ENCODE measurements at regions of chr7 and their contacts with region 1.

Region 1: DNA sequence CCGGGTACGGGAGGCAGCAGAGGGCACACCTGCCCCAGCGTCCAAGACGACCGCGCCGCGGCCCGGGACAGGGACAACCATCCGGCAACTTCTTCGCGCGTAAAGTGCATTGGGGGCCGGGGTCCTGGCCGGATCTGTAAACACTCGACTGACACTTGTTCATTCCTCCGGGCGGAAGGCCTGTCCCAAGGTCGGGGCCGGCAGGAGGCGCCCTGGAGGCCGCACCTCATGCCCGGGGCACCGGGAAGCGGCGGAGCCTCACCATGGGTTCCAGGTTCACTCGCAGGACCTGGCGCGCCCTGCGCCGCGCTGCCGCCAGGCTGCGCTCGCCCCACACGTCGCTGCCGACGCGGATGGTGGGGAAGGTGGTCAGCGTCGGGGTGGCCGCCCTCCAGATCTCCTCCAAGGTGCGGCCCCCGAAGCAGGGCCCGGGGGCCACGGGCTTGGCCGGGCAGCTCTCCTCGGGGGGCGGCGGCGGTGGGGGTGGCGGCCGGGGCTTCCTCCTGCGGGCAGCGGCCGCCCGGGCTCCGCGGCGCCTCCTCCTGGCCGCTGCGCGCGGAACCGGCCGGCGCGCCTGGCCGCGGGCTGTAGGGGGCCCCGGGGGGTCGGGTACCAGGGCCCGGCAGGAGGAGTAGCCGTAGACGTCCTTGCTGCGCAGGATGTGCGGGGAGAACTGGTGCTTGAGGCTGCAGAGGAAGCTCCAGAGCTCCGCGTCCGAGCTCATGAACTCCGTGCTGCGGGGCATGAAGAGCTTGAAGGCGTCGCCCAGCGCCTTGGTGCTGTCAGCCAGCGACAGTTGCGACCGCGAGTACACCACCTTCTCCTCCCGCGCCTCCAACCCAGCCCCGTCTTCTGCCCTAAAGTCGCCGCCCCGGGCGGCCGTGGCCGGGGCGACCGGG is 746 bp downstream of the CCDC71L start:
- DNase-seq: peak; percentile 71 to 87
- ATAC-seq: peak; percentile 47 to 63 (median 51)
- H3K4me3 ChIP-seq: peak overlapping the region; percentile 86
- H3K4me3 Mint-ChIP-seq: peak overlapping the region; percentile 97
- H3K27ac ChIP-seq: peak overlapping the region; percentile 91
- H3K27ac Mint-ChIP-seq: peak overlapping the region; percentile 90 to 92
- H3K4me1 ChIP-seq: peaks cover 15% of the 10 kb centered on the region
- H3K4me1 Mint-ChIP-seq: peaks cover 21 to 23% of the 10 kb centered on the region in 2 donors
- H3K27me3 ChIP-seq: no peaks in the 10 kb centered on the region
- H3K27me3 Mint-ChIP-seq: no peaks in the 10 kb centered on the region
- CTCF ChIP-seq: peak; percentile 71

Region 2: GRCh38 chr7:106285051-106285854 is 375.0 kb before region 1 on chr7:
- intact Hi-C with region 1: loop called (anchors 2 kb)
- DNase-seq: peak; percentile 92 to 98
- ATAC-seq: peak; percentile 88 to 96 (median 89)
- H3K4me3 ChIP-seq: peak overlapping the region; percentile 97
- H3K4me3 Mint-ChIP-seq: peak overlapping the region; percentile 95
- H3K27ac ChIP-seq: peak overlapping the region; percentile 97
- H3K27ac Mint-ChIP-seq: peak overlapping the region; percentile 93 to 95
- H3K4me1 ChIP-seq: peaks cover 12% of the 10 kb centered on the region
- H3K4me1 Mint-ChIP-seq: peaks cover 16 to 20% of the 10 kb centered on the region in 2 donors
- H3K27me3 ChIP-seq: no peaks in the 10 kb centered on the region
- H3K27me3 Mint-ChIP-seq: peaks cover under 1 to 2% of the 10 kb centered on the region in 2 donors
- CTCF ChIP-seq: no peak

Region 3: GRCh38 chr7:106717955-106718871 is 58.0 kb after region 1 on chr7:
- intact Hi-C with region 1: loop called (anchors 5 kb)
- DNase-seq: peak; percentile 22 to 63
- ATAC-seq: peak; percentile 94 to 98 (median 94)
- H3K4me3 ChIP-seq: no peak overlapping the region
- H3K4me3 Mint-ChIP-seq: no peak overlapping the region
- H3K27ac ChIP-seq: peak overlapping the region; percentile 54
- H3K27ac Mint-ChIP-seq: no peak overlapping the region
- H3K4me1 ChIP-seq: peaks cover 5% of the 10 kb centered on the region
- H3K4me1 Mint-ChIP-seq: no peaks in the 10 kb centered on the region
- H3K27me3 ChIP-seq: no peaks in the 10 kb centered on the region
- H3K27me3 Mint-ChIP-seq: peaks cover 0 to 2% of the 10 kb centered on the region in 2 donors
- CTCF ChIP-seq: no peak

Region 4: DNA sequence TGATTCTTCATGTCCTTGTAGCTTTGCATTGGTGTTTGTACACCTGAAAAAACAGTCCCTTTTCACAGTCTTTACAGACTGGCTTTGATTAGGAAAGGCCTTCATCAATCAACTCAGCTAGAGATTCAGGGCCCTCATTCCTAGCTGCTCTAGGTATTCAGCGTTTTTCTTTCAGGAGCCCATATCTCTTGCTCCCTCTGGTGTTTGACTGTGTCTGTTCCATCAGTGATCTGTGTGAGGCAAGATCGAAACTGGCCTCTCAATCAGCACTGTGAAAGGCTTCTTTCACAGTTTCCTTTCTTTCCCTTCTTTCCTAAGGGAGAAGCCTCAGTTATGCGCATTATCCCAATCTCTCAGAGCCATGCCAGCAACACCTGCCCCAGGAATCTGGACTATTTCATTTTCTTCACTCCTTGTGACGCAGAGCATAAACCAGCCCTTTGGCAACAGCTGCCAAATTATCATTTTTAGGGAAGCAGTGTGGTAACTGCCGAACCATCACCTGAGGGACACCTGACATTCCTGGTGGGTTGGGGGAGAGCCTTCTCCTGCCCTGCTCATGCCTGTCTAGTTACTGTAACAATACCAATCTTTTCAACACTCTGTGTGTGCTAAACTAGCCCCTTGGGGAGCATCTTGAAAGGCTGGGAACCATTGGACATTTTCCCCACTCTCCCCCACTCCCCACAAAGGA is 76.4 kb after region 1 on chr7:
- intact Hi-C with region 1: loop called (anchors 1 kb)
- DNase-seq: peak in 1 of 2 donors; percentile 78
- ATAC-seq: peak; percentile 78 to 88 (median 82)
- H3K4me3 ChIP-seq: no peak overlapping the region
- H3K4me3 Mint-ChIP-seq: no peak overlapping the region
- H3K27ac ChIP-seq: no peak overlapping the region
- H3K27ac Mint-ChIP-seq: peak overlapping the region in 1 of 2 donors; percentile 23
- H3K4me1 ChIP-seq: peaks cover 11% of the 10 kb centered on the region
- H3K4me1 Mint-ChIP-seq: peaks cover 16 to 19% of the 10 kb centered on the region in 2 donors
- H3K27me3 ChIP-seq: no peaks in the 10 kb centered on the region
- H3K27me3 Mint-ChIP-seq: peaks cover 0 to 3% of the 10 kb centered on the region in 2 donors
- CTCF ChIP-seq: peak; percentile 64

Region 5: DNA sequence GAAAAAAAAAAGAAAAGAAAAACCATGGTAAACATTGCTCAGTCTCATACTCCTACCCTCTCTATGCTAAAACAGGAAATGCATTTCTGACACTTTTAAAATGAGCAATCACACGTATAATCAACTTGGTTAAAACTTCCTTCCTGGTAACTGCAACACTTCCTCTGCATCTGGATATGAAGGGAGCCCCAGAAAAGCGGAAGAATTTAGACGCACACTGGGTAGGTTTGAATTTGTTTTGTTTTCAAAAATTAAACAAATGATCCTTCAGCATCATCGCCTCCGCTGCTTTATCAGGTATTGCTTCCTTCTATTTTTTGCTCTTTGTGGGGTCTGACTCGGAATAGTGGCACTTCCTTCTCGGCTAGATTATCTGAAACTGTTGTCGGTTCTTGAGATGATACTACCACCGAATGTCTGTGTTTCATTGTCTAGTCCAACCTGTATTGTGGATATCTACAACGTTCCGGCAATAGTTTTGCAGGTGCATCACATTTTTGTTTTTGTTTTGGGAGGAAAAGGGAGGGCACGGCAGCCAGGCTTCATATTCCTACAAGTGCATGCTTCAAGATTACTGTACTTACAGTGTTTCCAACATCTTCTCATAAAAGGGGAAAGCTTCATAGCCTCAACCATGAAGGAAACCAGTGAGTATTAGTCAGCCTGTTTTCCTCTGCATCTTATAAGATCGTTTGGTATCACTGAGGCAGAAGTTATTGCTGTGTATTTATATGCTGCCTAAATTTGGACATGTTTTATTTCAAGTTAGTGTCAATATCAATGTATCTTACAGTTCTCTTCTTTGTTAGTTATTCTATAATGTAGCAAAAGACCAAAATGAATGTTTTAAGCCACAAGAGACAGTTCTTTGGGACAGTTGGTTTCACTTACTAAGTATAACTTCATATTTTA is 205.2 kb after region 1 on chr7 and contains the start of gene PIK3CG:
- intact Hi-C with region 1: loop called (anchors 5 kb)
- DNase-seq: peak in 1 of 2 donors; percentile 78
- ATAC-seq: peak; percentile 85 to 94 (median 94)
- H3K4me3 ChIP-seq: peak within 1 kb of the TSS; percentile 89
- H3K4me3 Mint-ChIP-seq: peak within 1 kb of the TSS; percentile 94
- H3K27ac ChIP-seq: peak within 1 kb of the TSS; percentile 93
- H3K27ac Mint-ChIP-seq: peak within 1 kb of the TSS; percentile 92 to 97
- H3K4me1 ChIP-seq: peaks cover 43% of the 10 kb centered on the region
- H3K4me1 Mint-ChIP-seq: peaks cover 88 to 91% of the 10 kb centered on the region in 2 donors
- H3K27me3 ChIP-seq: no peaks in the 10 kb centered on the region
- H3K27me3 Mint-ChIP-seq: no peaks in the 10 kb centered on the region
- CTCF ChIP-seq: no peak
- total RNA-seq, gene PIK3CG: 64.9 to 83.3 (median 78.2) TPM

Region 6: DNA sequence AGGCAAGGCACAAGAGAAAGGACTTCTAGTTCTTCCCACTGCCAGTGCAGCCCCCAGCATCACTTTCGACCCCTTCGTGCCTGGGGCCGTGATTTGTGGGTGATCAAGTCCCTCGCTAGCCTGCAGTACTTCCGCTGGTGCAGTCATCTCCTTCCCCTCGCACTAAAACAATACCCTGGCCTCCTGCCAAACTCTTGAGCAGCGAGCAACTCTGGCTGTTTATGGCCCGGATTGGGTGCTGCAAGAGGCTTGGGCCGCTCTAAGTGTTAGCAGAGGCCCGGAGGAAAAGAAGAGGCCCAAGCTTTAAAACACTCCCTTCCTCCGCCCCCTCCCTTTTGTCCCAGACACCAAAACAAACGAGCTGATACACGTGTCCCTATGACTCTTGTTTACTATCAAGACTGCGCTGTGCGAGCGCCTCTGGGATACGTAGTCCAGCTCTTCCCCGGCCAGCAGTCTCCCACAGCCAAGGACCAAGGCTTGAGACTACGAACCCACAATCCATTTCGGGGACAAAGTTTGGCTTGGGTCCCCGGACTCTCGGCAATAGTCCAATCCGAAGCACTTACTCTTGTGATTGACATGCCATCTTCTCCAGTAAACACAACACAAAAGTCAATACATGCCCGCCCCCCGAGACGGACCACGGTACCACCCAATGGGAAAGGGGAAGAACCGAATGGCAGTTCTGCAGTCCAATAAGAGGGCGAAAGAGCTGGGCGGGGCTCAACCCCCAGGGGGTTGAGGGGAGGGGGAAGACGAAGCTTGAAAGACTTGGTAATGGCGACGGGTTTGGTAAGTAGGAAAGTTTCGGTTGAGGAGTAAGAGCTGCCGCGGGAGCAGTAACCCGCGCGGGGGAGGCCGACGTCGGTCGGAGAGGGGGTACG is 508.3 kb after region 1 on chr7 and contains the start of gene HBP1:
- intact Hi-C with region 1: loop called (anchors 5 kb)
- DNase-seq: peak; percentile 95 to 99
- ATAC-seq: peak; percentile 74 to 90 (median 78)
- H3K4me3 ChIP-seq: peak within 1 kb of the TSS; percentile 96
- H3K4me3 Mint-ChIP-seq: peak within 1 kb of the TSS; percentile 95
- H3K27ac ChIP-seq: peak within 1 kb of the TSS; percentile 99
- H3K27ac Mint-ChIP-seq: peak within 1 kb of the TSS; percentile 99 to 100
- H3K4me1 ChIP-seq: peaks cover 11% of the 10 kb centered on the region
- H3K4me1 Mint-ChIP-seq: peaks cover 36 to 49% of the 10 kb centered on the region in 2 donors
- H3K27me3 ChIP-seq: no peaks in the 10 kb centered on the region
- H3K27me3 Mint-ChIP-seq: peaks cover 4% of the 10 kb centered on the region in 2 donors
- CTCF ChIP-seq: no peak
- total RNA-seq, gene HBP1: 186 to 249 (median 243) TPM

Measured in natural killer cell (primary cell).